ENCODE measurements at regions of chr14 and their contacts with region 1.

Region 1: GRCh38 chr14:79011091-79011919 is 841.1 kb downstream of the NRXN3 start:
- DNase-seq: peak; percentile 89
- H3K4me3 ChIP-seq: no peak overlapping the region
- H3K27ac ChIP-seq: peak overlapping the region; percentile 78
- H3K4me1 ChIP-seq: peaks cover 12% of the 10 kb centered on the region
- H3K27me3 ChIP-seq: no peaks in the 10 kb centered on the region
- CTCF ChIP-seq: peak; percentile 22 to 48

Region 2: GRCh38 chr14:78782551-78782950 is 228.8 kb before region 1 on chr14:
- CTCF ChIA-PET with region 1: no interaction called
- dilution Hi-C with region 1: no loop called
- in situ Hi-C with region 1: no loop called
- intact Hi-C with region 1: no loop called
- DNase-seq: peak; percentile 11
- H3K4me3 ChIP-seq: no peak overlapping the region
- H3K27ac ChIP-seq: no peak overlapping the region
- H3K4me1 ChIP-seq: no peaks in the 10 kb centered on the region
- H3K27me3 ChIP-seq: no peaks in the 10 kb centered on the region
- CTCF ChIP-seq: no peak

Region 3: DNA sequence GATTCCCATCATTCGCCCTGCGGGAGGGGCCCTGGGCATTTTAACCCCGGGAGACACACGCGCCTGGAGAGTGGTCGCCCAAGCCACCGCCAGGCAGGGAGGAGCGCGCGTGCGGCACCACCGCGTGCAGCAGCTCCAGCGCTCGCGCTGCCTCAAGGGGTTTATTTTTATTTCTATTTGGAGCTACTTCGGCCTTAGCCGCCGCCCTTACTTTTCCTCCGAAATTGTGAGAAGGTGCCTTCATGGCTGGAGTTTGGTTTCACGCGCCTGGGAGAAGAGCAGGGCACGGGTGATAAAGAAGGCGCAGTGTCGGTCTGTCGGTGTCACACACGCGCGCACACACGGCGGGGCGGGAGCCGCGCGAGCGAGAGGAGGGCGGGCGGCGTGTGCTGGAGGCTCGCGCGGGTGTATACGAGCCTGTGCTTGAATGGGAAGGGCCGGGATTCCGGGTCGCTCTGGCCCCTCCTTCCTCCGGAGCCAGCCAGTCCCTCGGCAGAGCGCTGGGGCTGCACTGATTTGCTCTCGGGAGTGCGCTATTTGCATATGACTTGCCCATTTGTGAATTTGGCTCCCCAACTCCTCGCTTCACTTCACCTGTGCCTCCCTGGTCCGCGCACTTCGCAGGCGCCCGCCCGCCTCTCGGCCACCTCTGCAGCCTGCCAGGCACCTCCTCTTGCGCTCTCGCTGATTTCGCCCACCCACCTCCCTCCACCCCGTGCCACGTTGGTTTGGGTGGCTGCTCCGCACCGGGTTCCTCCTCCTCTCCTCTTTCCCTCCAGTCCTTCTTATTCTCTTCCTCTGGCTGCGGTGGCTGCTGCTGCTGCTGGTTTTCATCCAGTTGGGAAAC is 267.7 kb after region 1 on chr14:
- CTCF ChIA-PET with region 1: no interaction called
- dilution Hi-C with region 1: no loop called
- in situ Hi-C with region 1: no loop called
- intact Hi-C with region 1: loop called (anchors 2 kb)
- DNase-seq: peak; percentile 90
- H3K4me3 ChIP-seq: peak overlapping the region; percentile 44 to 61 (median 57)
- H3K27ac ChIP-seq: no peak overlapping the region
- H3K4me1 ChIP-seq: peaks cover 16% of the 10 kb centered on the region
- H3K27me3 ChIP-seq: peaks cover 8% of the 10 kb centered on the region
- CTCF ChIP-seq: no peak

Region 4: DNA sequence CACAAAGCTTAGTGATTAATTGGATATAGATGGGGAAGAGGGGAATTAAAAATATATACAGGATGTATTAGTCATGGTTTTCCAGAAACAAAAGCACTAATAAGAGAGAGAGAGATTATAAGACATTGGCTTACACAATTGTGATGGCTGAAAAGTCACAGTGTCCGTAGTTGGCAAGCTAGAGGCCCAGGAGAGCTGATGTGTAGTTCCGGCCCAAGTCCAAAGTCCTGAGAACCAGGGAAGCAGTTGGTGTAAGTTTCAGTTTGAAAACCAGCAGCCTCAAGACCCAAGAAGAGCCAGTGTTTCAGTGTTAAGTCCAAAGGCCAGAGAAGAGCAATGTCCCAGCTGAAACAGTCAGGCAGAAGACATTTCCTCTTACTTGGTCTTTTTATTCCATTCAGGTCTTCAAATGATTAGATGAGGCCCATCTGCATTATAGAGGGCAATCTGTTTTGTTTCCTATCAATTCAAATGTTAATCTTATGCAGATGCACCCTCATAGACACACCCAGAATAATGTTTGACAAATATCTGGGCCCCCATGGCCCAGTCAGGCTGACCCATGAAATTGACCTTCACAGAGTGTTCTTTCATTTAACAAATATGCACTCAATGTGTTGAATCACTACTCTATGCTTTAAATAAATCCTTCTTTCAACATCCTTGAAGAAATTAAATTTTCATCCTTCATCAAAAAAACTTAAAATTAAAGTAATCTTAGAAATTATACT is 1267.2 kb after region 1 on chr14:
- CTCF ChIA-PET with region 1: interaction called, 37 read pairs
- dilution Hi-C with region 1: no loop called
- in situ Hi-C with region 1: no loop called
- intact Hi-C with region 1: no loop called
- DNase-seq: no peak
- H3K4me3 ChIP-seq: no peak overlapping the region
- H3K27ac ChIP-seq: no peak overlapping the region
- H3K4me1 ChIP-seq: no peaks in the 10 kb centered on the region
- H3K27me3 ChIP-seq: no peaks in the 10 kb centered on the region
- CTCF ChIP-seq: no peak